Endothelial cell of umbilical vein (primary cell): ENCODE measurements at regions of chr19 and their contacts with region 1.

Region 1: DNA sequence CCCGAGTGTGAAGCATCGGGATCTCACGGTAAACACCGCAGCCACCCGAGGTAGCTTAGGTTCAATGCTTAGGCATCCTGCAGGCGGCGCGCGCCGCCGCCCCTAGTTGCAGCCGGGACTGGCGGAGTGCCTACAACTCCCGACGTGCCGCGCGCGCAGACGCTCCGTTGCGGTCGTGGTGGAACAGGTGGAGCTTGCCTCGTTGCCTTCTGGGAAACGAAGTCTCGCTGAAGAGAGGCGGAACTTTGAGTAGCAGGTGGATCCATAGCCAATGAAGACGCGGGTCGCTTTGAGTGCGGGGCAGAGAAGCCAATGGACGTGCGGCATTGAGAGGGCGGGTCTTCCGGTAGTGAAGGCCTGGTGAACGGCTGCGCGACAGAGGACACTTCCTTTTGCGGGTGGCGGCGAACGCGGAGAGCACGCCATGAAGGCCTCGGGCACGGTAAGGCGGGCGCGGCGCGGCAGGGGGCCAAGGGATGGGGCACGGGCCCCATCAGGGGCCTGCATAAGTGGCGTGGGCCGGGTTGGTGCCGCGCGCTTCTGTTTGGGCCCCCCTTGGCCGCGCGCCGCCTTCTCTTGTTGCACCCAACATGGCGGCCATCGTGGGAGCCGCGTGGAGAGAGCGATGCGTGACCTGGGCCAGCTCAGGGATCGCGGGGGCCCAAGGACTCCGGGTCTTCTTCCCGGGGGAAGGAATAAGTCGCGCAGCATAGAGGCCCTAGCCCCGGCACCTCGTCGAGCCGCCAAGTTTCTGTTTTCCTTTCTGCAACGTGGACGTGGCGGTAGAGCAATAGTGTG is at the start of gene RPL18A:
- DNase-seq: peak; percentile 100
- H3K4me3 ChIP-seq: peak within 1 kb of the TSS; percentile 83 to 96 (median 92)
- H3K27ac ChIP-seq: peak within 1 kb of the TSS; percentile 42
- H3K4me1 ChIP-seq: peaks cover 15% of the 10 kb centered on the region
- H3K27me3 ChIP-seq: no peaks in the 10 kb centered on the region
- CTCF ChIP-seq: peak; percentile 84 to 90
- POLR2A ChIP-seq: peak; percentile 96
- total RNA-seq, gene RPL18A: 1,947 and 1,970 TPM in 2 replicates

Region 2: DNA sequence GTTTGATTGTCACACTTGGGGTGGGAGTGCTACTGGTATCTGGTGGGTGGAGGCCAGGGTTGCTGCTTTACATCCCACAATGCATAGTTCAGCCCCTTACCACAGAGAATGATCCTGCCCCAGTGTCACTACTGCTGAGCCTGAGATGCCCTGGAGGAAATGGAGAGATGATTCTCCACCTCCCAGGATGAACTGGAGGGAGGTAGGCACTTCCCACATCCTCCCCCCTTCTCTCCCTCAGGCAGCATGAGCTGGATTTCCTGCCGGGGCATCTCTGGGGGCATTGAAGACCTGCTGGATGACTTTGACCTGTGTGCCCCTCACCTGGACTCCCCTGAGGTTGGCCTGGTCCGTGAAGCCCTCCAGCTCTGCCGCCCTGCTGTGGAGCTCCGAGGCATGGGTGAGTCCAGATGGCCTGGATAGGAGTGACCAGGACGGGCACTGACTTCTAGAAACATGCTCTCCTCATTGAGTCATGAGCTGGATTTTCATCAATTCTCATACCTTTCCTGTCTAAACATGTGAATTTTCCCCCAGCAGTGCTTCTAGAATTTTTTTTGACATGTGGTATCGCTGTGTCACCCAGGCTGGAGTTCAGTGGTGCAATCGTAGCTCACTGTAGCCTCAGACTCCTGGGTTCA is 1094.8 kb before region 1 on chr19:
- CTCF ChIA-PET with region 1: no interaction called
- POLR2A ChIA-PET with region 1: no interaction called
- dilution Hi-C with region 1: no loop called
- intact Hi-C with region 1: no loop called
- DNase-seq: no peak
- H3K4me3 ChIP-seq: no peak overlapping the region
- H3K27ac ChIP-seq: no peak overlapping the region
- H3K4me1 ChIP-seq: no peaks in the 10 kb centered on the region
- H3K27me3 ChIP-seq: peaks cover 0 to 3% of the 10 kb centered on the region in 2 experiments
- CTCF ChIP-seq: no peak
- POLR2A ChIP-seq: no peak

Region 3: GRCh38 chr19:17703824-17704463 is 155.8 kb before region 1 on chr19:
- CTCF ChIA-PET with region 1: interaction called, 6 read pairs
- POLR2A ChIA-PET with region 1: no interaction called
- dilution Hi-C with region 1: no loop called
- intact Hi-C with region 1: loop called (anchors 1 kb)
- DNase-seq: peak; percentile 60
- H3K4me3 ChIP-seq: no peak overlapping the region
- H3K27ac ChIP-seq: no peak overlapping the region
- H3K4me1 ChIP-seq: no peaks in the 10 kb centered on the region
- H3K27me3 ChIP-seq: no peaks in the 10 kb centered on the region
- CTCF ChIP-seq: peak; percentile 85
- POLR2A ChIP-seq: no peak

Region 4: DNA sequence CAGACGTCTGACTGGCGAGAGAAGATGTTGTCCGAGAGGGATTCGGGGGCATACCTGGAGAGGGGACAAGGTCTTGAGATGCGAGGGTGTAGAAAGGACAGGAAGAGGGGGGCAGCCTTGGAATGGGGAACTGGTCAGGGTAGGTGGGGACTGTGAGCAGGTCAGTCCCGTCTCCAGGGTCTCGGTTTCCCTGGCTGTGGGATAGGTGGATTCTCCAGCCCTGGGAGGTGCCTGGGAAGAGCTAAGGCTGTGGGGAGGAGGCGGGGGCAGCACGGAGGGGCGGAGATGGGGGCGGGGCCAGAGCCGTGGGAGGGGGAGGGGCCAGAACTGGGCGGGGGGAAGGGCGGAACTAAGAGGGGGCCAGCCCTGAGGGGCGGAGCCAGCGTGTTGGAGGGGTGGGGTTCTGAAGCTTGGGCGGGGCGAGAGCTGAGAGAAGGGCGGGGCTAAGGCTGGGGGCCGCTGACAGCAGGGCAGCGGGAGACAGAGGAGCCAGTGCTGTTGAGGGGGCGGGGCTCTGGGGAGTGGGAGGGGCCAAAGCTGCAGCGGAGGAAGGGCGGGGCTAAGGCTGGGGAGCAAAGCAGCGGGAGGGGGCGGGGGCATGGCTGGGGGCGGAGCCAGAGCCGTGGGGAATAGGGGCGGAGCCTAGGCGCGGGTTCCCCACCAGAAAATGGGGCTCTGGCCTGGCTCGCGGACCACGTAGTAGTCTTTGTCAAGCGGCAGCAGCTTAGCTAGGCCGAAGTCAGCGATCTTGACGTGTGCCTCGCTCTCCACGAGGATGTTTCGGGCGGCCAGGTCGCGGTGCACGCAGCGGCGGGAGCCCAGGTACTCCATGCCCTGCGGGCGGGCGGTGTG is 28.9 kb before region 1 on chr19:
- CTCF ChIA-PET with region 1: interaction called, 10 read pairs
- POLR2A ChIA-PET with region 1: interaction called, 4 read pairs
- dilution Hi-C with region 1: no loop called
- intact Hi-C with region 1: no loop called
- DNase-seq: peak; percentile 47
- H3K4me3 ChIP-seq: no peak overlapping the region
- H3K27ac ChIP-seq: no peak overlapping the region
- H3K4me1 ChIP-seq: peaks cover 13% of the 10 kb centered on the region
- H3K27me3 ChIP-seq: peaks cover 0 to 3% of the 10 kb centered on the region in 2 experiments
- CTCF ChIP-seq: no peak
- POLR2A ChIP-seq: no peak

Region 5: GRCh38 chr19:17873786-17874757 is 14.3 kb after region 1 on chr19:
- CTCF ChIA-PET with region 1: interaction called, 11 read pairs
- POLR2A ChIA-PET with region 1: interaction called, 13 read pairs
- dilution Hi-C with region 1: no loop called
- intact Hi-C with region 1: no loop called
- DNase-seq: no peak
- H3K4me3 ChIP-seq: no peak overlapping the region
- H3K27ac ChIP-seq: no peak overlapping the region
- H3K4me1 ChIP-seq: no peaks in the 10 kb centered on the region
- H3K27me3 ChIP-seq: peaks cover 32 to 44% of the 10 kb centered on the region in 2 experiments
- CTCF ChIP-seq: no peak
- POLR2A ChIP-seq: no peak

Region 6: GRCh38 chr19:17902701-17903100 is 43.0 kb after region 1 on chr19:
- CTCF ChIA-PET with region 1: no interaction called
- POLR2A ChIA-PET with region 1: no interaction called
- dilution Hi-C with region 1: no loop called
- intact Hi-C with region 1: no loop called
- DNase-seq: no peak
- H3K4me3 ChIP-seq: no peak overlapping the region
- H3K27ac ChIP-seq: no peak overlapping the region
- H3K4me1 ChIP-seq: no peaks in the 10 kb centered on the region
- H3K27me3 ChIP-seq: peaks cover 0 to 2% of the 10 kb centered on the region in 2 experiments
- CTCF ChIP-seq: no peak
- POLR2A ChIP-seq: no peak

Region 7: DNA sequence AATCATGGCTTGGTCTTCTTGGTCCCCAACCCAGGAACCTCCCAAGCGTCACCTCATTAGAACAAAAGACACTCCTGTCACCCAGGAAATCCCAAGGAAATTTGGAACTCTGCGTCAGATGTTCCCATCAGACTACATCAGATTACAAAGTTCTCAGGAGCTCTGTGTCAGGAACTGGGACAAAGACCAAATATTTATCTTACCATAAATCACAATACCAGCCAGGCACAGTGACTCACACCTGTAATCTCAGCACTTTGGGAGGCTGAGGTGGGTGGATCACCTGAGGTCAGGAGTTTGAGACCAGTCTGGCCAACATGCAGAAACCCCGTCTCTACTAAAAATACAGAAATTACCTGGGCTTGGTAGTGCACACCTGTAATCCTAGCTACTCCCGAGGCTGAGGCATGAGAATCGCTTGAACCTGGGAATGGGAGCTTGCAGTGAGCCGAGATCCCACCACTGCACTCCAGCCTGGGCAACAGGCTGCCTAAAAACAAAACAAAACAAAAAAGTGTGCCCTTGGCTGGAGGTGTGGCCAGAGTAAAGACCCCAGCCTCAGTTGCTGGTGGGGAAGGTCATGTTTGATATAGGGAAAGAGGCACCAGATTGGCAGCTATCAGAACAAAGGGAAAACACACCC is 56.3 kb after region 1 on chr19:
- CTCF ChIA-PET with region 1: no interaction called
- POLR2A ChIA-PET with region 1: no interaction called
- dilution Hi-C with region 1: no loop called
- intact Hi-C with region 1: no loop called
- DNase-seq: no peak
- H3K4me3 ChIP-seq: no peak overlapping the region
- H3K27ac ChIP-seq: no peak overlapping the region
- H3K4me1 ChIP-seq: no peaks in the 10 kb centered on the region
- H3K27me3 ChIP-seq: no peaks in the 10 kb centered on the region
- CTCF ChIP-seq: no peak
- POLR2A ChIP-seq: no peak

Region 8: DNA sequence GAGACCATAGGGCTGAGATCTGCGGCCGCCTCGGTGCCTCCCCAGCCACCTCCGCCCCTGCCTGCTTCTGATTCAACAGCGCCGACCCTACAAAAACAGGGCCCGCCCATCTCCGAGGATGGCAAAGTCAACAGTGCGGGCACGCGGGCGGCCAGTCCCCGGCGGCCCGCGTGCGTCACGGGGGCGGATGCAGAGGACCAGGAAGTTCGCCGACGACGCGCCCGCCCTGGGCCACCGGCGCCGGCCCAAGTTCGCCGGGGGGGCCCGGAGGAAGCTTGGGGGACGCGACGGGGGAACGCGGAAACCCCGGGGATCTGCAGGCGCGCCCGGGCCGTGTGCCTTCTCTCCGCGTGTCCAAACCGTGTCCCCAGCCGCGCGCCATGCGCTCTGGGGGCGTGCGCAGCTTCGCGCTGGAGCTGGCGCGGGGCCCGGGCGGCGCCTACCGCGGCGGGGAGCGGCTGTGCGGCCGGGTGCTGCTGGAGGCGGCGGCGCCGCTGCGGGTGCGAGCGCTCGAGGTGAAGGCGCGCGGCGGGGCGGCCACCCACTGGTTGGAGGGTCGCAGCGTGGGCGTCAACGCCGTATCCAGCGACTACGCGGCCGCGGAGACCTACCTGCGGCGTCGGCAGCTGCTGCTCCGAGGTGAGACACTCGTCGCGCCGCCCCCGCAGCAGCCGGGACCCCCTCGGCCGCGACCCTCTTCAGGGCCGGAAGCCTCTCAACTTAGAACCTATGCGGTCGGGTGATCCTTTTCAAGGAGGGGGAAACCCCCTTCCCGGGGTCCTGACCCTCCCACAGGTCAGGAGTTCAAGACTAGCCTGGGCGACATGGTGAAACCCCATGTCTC is 141.4 kb after region 1 on chr19:
- CTCF ChIA-PET with region 1: interaction called, 41 read pairs
- POLR2A ChIA-PET with region 1: no interaction called
- dilution Hi-C with region 1: no loop called
- intact Hi-C with region 1: loop called (anchors 1 kb)
- DNase-seq: peak; percentile 82
- H3K4me3 ChIP-seq: peak overlapping the region; percentile 73 to 85 (median 77)
- H3K27ac ChIP-seq: peak overlapping the region; percentile 90
- H3K4me1 ChIP-seq: peaks cover 15% of the 10 kb centered on the region
- H3K27me3 ChIP-seq: no peaks in the 10 kb centered on the region
- CTCF ChIP-seq: no peak
- POLR2A ChIP-seq: peak; percentile 66

Region 9: DNA sequence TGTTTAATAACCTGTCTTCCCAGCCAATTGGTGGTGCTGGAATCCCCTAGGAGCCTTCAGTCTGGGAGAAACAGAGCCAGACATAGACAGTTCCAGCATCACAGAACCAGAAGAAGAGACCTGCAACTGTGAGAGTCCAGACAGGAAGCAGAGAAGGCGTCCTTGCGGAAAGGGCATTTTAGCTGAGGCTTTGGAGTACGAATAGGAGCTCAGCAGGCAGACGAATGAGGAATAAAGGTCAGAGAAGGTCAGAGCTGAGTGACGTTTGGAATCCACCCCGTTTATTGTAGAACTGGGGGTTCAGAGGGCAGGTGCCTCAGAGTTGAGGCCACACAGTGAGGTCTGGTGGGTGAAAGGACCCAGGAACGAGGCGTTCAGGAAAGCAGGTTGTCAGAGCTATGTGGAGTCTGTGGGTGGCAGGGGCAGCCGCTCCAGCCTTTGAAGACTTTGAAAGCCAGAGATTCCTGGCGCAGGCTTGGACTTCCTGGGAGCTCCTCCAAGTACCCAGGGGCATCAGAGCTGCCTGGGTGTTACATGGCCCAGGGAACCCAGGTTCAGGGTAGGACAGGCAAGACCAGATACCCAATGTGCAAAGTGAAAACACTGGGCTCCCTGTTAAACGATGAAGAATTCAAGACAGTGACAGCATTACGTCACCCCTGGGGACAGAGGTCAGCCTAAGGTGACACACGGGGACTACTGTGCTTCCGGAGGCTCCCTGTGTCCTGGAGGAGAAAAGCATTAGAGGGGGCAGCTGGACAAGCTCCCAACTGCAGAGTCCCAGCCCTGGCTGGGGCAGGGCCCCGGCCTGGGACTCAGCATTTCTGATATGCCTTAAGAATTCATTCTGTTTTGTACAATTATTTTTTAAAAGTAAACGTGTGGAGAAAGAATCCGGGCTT is 153.7 kb after region 1 on chr19:
- CTCF ChIA-PET with region 1: no interaction called
- POLR2A ChIA-PET with region 1: no interaction called
- dilution Hi-C with region 1: no loop called
- intact Hi-C with region 1: no loop called
- DNase-seq: no peak
- H3K4me3 ChIP-seq: no peak overlapping the region
- H3K27ac ChIP-seq: no peak overlapping the region
- H3K4me1 ChIP-seq: peaks cover 11% of the 10 kb centered on the region
- H3K27me3 ChIP-seq: no peaks in the 10 kb centered on the region
- CTCF ChIP-seq: no peak
- POLR2A ChIP-seq: no peak